ENCODE measurements at regions of chr19 and their contacts with region 1.

Region 1: GRCh38 chr19:45478454-45479238 is 10.8 kb downstream of the FOSB start:
- DNase-seq: peak; percentile 81 to 86
- ATAC-seq: peak; percentile 95

Region 2: GRCh38 chr19:45439569-45440254 is 38.9 kb before region 1 on chr19:
- intact Hi-C with region 1: loop called (anchors 2 to 5 kb)
- DNase-seq: peak; percentile 80 to 86
- ATAC-seq: peak; percentile 38